Vagina (tissue), 2 donors: ENCODE measurements at regions of chr2 and their contacts with region 1.

Region 1: GRCh38 chr2:53690876-53691275 is 76.7 kb upstream of the CHAC2 start:
- DNase-seq: no peak
- H3K4me3 ChIP-seq: no peak overlapping the region
- H3K27ac ChIP-seq: no peak overlapping the region
- H3K4me1 ChIP-seq: no peaks in the 10 kb centered on the region
- H3K27me3 ChIP-seq: no peaks in the 10 kb centered on the region
- CTCF ChIP-seq: no peak
- POLR2A ChIP-seq: no peak

Region 2: DNA sequence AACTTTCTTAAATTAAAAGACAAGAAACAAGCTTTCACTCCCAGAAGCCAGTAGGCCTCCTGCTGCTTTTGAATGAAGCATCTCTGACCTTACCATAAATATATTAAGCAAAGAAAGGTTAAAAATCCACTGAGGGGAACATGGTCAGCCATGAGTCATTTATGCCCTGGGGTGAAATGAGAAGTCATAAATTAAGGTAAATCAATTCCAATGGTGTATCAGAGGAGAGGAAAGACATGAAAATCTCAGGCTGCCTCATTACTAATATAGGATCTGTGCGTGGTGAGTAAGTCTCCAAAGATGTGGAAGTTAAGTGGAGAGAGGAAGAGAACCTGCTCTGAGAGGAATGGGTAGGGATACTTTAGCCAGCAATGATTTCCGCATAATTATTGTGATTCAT is 215.6 kb before region 1 on chr2:
- intact Hi-C with region 1: no loop called
- DNase-seq: no peak
- H3K4me3 ChIP-seq: no peak overlapping the region
- H3K27ac ChIP-seq: no peak overlapping the region
- H3K4me1 ChIP-seq: no peaks in the 10 kb centered on the region
- H3K27me3 ChIP-seq: no peaks in the 10 kb centered on the region
- CTCF ChIP-seq: no peak
- POLR2A ChIP-seq: no peak

Region 3: GRCh38 chr2:53672881-53673522 is 17.9 kb before region 1 on chr2:
- intact Hi-C with region 1: loop called (anchors 1 kb)
- DNase-seq: no peak
- H3K4me3 ChIP-seq: no peak overlapping the region
- H3K27ac ChIP-seq: no peak overlapping the region
- H3K4me1 ChIP-seq: no peaks in the 10 kb centered on the region
- H3K27me3 ChIP-seq: no peaks in the 10 kb centered on the region
- CTCF ChIP-seq: no peak
- POLR2A ChIP-seq: no peak